ENCODE measurements at regions of chr10 and their contacts with region 1.

Region 1: DNA sequence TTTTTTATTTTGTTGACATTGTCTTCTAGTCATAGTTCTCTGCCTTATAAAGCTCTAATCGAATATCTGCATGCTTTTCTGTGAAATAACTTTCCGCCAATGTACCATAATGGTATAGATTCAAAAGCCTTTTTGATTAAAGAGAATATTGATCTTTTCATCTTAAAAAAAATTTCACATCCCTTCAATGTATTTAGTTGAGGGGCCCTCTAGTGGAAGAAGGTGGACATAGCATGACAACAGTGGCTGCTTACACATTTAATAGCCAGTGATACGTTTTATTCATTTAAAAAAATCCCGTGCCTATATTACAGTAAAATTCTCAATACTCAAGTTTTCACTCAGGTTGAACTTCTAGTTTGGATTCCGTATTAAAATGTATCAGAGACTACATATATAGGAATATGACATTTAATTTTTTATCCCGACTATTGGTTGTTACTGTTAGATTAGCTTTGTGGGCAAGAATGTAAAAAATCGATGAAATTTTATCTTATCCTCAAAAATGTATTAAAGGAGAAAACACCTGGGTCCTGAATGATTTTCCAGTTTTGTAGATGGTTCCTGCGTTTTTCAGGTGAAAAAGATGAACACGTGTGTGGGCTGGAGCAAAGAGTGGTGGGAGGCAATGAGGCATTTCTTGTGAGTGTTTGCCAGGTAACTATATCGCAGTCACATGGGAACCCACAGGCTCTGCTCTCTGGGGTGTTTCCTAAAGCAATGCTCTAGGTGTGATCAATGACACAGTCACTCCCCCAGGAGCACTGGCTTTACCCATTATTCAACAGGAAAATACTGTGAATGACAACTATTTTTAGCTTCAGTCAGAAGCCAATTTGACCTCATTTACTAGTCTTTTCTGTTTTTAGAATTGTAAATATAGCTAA is 24.1 kb upstream of the PNLIP start:
- DNase-seq: peak; percentile 62
- ATAC-seq: peak; percentile 84
- H3K4me3 ChIP-seq: no peak overlapping the region
- H3K27ac ChIP-seq: no peak overlapping the region
- H3K4me1 ChIP-seq: no peaks in the 10 kb centered on the region
- H3K27me3 ChIP-seq: peaks cover 30% of the 10 kb centered on the region
- CTCF ChIP-seq: peak; percentile 72 to 96 (median 84)
- POLR2A ChIP-seq: no peak
- RAD21 ChIP-seq: peak; percentile 67

Region 2: DNA sequence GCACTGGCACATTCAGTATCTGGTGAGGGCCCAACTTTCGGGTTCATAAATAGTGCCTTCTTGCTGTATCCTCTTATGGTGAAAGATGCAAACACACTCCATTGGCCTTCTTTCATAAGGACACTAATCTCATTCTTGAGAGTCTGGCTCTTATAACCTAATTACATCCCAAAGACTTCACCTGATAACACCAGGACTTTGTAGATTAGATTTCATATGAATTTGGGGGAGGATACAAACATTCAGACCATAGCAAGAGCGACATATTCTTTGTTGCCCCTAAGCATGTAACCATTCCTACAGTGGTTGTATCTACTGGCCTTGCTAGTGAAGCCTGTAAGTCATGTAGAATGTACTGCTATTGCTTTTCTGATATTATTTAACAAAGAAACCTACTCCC is 773.8 kb before region 1 on chr10:
- CTCF ChIA-PET with region 1: no interaction called
- POLR2A ChIA-PET with region 1: no interaction called
- RAD21 ChIA-PET with region 1: no interaction called
- intact Hi-C with region 1: no loop called
- DNase-seq: no peak
- ATAC-seq: no peak
- H3K4me3 ChIP-seq: no peak overlapping the region
- H3K27ac ChIP-seq: no peak overlapping the region
- H3K4me1 ChIP-seq: no peaks in the 10 kb centered on the region
- H3K27me3 ChIP-seq: no peaks in the 10 kb centered on the region
- CTCF ChIP-seq: no peak
- POLR2A ChIP-seq: no peak
- RAD21 ChIP-seq: no peak

Region 3: DNA sequence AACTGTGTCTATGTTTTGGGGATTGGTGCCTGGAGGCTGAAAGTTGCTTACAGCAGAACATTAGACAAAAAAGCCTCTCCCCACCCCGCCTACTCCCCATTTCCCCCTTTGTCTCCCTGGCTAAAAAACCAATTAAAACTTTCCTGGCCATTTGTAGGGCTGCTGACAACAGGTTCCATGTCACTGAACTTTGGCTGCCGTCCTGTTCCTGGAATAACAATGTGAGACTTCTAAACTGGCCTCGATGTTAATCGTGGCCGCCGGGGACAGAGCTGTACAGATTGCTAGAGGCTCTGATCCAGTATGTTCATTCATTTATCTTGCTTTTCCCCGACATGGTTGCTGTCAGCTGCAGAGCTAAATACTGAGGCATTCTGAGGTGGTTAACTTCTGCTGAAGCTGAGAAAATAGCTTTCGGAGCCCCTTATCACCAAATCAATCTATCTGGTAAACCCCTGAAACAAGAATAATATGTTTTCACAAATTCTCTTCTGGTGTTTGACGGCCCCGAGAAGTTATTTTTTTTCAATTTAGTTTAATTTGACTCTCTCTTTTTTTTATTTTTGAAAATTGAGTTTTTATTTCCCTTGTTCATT is 520.3 kb before region 1 on chr10:
- CTCF ChIA-PET with region 1: no interaction called
- POLR2A ChIA-PET with region 1: no interaction called
- RAD21 ChIA-PET with region 1: no interaction called
- intact Hi-C with region 1: no loop called
- DNase-seq: no peak
- ATAC-seq: no peak
- H3K4me3 ChIP-seq: no peak overlapping the region
- H3K27ac ChIP-seq: no peak overlapping the region
- H3K4me1 ChIP-seq: no peaks in the 10 kb centered on the region
- H3K27me3 ChIP-seq: peaks cover 9% of the 10 kb centered on the region; the same call in 1 of the 2 replicates
- CTCF ChIP-seq: no peak
- POLR2A ChIP-seq: no peak
- RAD21 ChIP-seq: no peak

Region 4: GRCh38 chr10:116444527-116445142 is 77.0 kb before region 1 on chr10:
- CTCF ChIA-PET with region 1: no interaction called
- POLR2A ChIA-PET with region 1: no interaction called
- RAD21 ChIA-PET with region 1: no interaction called
- intact Hi-C with region 1: loop called (anchors 2 kb)
- DNase-seq: peak; percentile 52
- ATAC-seq: peak; percentile 90
- H3K4me3 ChIP-seq: no peak overlapping the region
- H3K27ac ChIP-seq: no peak overlapping the region
- H3K4me1 ChIP-seq: no peaks in the 10 kb centered on the region
- H3K27me3 ChIP-seq: peaks cover 17% of the 10 kb centered on the region
- CTCF ChIP-seq: peak; percentile 80 to 98 (median 94)
- POLR2A ChIP-seq: no peak
- RAD21 ChIP-seq: peak; percentile 78

Region 5: GRCh38 chr10:116470768-116471415 is 50.8 kb before region 1 on chr10:
- CTCF ChIA-PET with region 1: interaction called, 3 read pairs
- POLR2A ChIA-PET with region 1: no interaction called
- RAD21 ChIA-PET with region 1: no interaction called
- intact Hi-C with region 1: loop called (anchors 5 kb)
- DNase-seq: peak; percentile 33
- ATAC-seq: peak; percentile 99
- H3K4me3 ChIP-seq: no peak overlapping the region
- H3K27ac ChIP-seq: no peak overlapping the region
- H3K4me1 ChIP-seq: peaks cover 0 to 5% of the 10 kb centered on the region in 2 experiments; a peak in 2 of 4 replicates
- H3K27me3 ChIP-seq: peaks cover 15% of the 10 kb centered on the region
- CTCF ChIP-seq: peak; percentile 72 to 90 (median 84)
- POLR2A ChIP-seq: no peak
- RAD21 ChIP-seq: peak; percentile 79

Region 6: DNA sequence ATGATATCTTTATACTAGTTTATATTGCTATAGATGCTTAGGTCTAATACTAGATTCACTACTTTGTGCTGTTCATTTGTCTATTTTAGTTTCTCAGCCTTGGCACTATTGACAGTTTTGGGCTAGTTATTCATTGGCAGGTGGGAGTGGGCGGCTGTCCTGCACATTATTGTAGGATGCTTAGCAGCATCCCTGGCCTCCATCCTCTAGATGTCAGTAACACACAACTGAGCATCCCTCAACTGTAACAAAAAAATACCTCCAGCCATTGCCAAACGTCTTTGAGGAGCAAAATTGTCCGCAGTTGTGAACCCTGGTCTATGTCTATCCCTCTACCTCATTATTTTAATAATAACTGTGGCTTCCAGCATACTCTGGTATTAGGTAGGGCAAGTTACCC is 10.3 kb before region 1 on chr10:
- CTCF ChIA-PET with region 1: interaction called, 14 read pairs
- POLR2A ChIA-PET with region 1: no interaction called
- RAD21 ChIA-PET with region 1: no interaction called
- intact Hi-C with region 1: no loop called
- DNase-seq: no peak
- ATAC-seq: peak; percentile 86
- H3K4me3 ChIP-seq: no peak overlapping the region
- H3K27ac ChIP-seq: no peak overlapping the region
- H3K4me1 ChIP-seq: no peaks in the 10 kb centered on the region
- H3K27me3 ChIP-seq: peaks cover 13% of the 10 kb centered on the region; the same call in 1 of the 2 replicates
- CTCF ChIP-seq: peak in 2 of 3 experiments; percentile 21 to 44; a peak in 3 of 6 replicates
- POLR2A ChIP-seq: no peak
- RAD21 ChIP-seq: peak; percentile 44